ENCODE measurements at regions of chr5 and their contacts with region 1.

Region 1: DNA sequence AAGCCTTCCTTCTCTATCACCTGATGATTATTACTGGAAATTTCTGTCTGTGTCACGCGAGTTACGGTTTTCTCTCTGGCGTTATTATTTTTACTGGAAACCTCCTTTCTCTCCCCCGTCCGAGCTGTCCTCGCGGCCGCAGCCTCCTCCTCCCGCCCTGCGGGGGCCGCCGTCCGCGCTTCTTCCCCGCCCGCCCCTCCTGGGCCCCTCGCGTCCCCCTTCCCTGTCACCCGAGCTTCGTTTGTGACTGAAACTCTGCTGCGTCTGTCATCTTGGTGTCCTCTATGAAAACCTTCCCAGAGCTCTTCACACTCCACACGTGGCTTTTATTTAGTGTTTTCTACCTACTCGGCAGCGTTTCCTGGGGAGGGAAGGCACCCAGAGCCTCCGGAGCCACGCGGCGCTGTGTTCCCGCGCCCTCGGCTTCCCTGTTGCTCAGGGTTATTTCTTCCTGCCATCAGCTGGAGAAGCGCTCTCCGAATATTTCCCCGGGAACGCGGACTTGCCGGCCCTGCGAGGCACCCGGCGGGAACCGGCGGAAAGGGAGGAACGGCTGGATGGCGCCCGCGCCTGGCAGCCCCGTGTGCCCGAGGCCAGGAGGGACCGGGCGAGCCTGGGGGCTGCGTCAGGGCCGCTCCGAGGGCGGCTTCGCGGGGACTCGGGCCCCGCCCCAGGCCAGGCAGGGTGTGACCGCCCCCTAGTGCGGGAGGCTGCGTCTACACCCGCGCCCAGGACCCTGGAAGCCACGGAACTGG is 33.9 kb downstream of the TRIP13 start:
- DNase-seq: peak in 3 of 4 donors; percentile 33 to 51 (median 45)
- ATAC-seq: peak; percentile 79
- H3K4me3 ChIP-seq: no peak overlapping the region
- H3K27ac ChIP-seq: peak overlapping the region in 2 of 4 donors; percentile 21 to 45
- H3K4me1 ChIP-seq: peaks cover 20% of the 10 kb centered on the region
- H3K27me3 ChIP-seq: peaks cover 0 to 7% of the 10 kb centered on the region in 2 donors
- CTCF ChIP-seq: peak in 6 of 7 experiments; percentile 20 to 47 (median 36)
- POLR2A ChIP-seq: peak in 2 of 3 donors; percentile 26 to 33

Region 2: DNA sequence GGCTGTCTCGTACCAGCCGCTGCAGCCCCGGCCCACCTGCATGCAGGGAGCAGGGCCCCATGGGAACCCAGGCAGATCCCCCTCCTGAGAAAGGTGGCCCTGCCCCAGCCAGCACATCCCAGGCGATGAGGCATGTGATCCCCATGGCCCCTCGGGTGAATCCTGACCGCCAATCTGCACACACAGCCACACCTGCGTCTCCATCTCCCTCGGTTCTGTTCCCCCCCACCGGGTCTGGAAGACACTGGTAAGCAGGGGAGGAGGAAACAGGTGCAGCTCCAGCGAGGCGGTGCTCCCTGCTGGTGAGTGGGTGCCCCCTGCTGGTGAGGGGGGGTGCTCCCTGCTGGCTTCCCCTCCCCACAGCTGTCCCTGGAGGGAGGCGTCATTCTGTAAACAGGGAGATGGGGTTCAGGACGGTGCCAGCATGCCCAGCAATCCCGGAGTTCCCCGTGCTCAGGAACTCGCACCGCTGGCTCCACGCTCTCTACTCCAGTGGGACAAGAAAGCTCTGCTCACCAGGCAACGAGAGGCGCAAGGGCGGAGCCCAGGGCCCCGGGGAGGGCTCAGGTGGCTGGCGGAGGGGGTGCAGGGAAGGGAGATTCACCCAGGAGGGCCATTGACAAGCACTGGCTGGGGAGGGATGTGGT is 213.7 kb after region 1 on chr5:
- intact Hi-C with region 1: loop called (anchors 5 kb)
- DNase-seq: peak; percentile 88 to 93 (median 89)
- ATAC-seq: peak; percentile 92
- H3K4me3 ChIP-seq: no peak overlapping the region
- H3K27ac ChIP-seq: peak overlapping the region in 3 of 4 donors; percentile 17 to 66 (median 51)
- H3K4me1 ChIP-seq: peaks cover 20% of the 10 kb centered on the region
- H3K27me3 ChIP-seq: no peaks in the 10 kb centered on the region
- CTCF ChIP-seq: peak; percentile 79 to 97 (median 93)
- POLR2A ChIP-seq: no peak

Measured in body of pancreas (tissue), 4 donors.